ENCODE measurements at regions of chr3 and their contacts with region 1.

Region 1: DNA sequence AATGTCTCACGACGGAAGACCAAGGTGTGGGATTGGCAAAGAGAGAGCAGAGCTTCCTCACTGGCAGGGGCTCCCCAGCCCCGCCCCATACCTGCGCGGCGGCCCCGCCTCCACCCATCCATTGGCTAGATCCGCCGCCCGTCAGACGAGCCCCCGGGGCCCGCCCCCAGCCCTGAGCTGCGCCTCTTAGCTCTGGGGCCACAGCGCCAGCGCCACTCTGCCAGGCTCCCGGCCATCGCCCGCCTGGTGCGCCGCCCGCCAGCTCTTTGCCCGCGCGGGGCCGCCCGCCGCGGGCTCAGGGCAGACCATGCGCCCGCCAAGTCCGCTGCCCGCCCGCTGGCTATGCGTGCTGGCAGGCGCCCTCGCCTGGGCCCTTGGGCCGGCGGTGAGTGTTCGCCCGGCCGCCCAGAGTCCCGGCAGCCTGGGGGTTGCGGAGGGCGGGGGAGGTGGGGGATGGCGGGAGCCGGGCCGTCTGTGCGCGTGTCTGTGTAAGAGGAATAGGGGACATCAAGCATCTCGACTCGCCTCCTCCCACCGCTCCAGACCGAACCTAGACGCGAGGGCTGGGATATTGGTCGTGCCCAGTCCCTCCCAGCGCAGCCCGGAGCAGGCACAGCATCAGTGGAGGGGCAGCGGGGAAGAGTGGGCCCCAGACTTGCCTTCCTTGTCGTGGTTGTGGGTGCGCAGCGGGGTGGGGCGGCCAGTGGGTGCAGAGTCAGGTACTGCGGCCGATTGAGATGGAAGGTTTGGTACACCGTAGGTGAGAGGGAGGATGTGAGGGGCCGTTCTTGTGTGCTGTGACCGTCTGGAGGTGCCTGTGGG is at the start of gene VIPR1:
- DNase-seq: peak; percentile 74 to 83 (median 79)
- H3K4me3 ChIP-seq: peak within 1 kb of the TSS; percentile 28 to 87 (median 68)
- H3K27ac ChIP-seq: no peak within 1 kb of the TSS
- H3K4me1 ChIP-seq: peaks cover 0 to 37% (median 27%) of the 10 kb centered on the region in 4 experiments
- H3K27me3 ChIP-seq: peaks cover 4 to 43% (median 16%) of the 10 kb centered on the region in 5 experiments

Region 2: DNA sequence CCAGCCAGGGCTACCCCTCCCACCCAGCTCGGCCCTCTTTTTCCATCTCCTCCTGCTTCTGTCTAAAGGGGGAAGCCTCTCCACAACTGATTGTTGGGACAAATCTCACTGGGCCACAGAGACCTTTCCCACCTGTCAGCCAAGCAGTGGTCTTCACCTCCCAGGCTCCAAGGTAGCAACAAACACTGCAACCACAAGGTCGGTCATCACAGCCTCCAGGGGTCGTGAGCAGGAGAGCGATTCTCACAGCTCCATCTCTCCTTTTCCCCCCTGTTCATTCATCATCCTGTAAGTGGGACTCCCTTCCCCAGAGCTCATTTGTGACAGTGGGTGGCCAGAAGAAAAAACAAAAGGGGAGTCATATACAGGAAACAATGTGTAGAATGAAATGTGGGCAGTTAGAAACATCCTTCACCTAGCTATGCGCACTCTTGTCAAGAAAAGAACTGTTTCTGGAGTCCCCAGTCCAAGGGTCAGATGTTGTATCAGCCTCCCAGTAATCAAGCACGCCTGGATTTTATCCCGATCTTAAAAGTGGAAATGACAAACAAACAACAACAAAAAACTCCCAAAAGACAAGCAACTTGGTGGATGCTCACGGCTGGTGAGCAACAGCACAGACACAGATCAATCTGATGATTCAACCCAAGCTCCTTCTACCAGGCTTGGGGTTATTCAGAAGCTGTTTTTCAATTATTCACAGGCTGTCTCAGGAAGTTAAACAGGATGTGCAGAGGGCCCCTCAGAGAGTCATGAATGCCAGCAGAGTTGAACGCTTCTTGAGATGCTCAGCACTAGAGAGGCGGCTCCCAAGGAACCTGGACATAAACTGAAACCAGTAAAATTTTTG is 114.6 kb before region 1 on chr3:
- CTCF ChIA-PET with region 1: no interaction called
- POLR2A ChIA-PET with region 1: no interaction called
- DNase-seq: peak; percentile 10 to 62 (median 51)
- H3K4me3 ChIP-seq: peak overlapping the region in 1 of 7 experiments; percentile 26
- H3K27ac ChIP-seq: no peak overlapping the region
- H3K4me1 ChIP-seq: peaks cover 3 to 25% (median 19%) of the 10 kb centered on the region in 4 experiments
- H3K27me3 ChIP-seq: peaks cover 0 to 3% (median 0%) of the 10 kb centered on the region in 5 experiments

Region 3: DNA sequence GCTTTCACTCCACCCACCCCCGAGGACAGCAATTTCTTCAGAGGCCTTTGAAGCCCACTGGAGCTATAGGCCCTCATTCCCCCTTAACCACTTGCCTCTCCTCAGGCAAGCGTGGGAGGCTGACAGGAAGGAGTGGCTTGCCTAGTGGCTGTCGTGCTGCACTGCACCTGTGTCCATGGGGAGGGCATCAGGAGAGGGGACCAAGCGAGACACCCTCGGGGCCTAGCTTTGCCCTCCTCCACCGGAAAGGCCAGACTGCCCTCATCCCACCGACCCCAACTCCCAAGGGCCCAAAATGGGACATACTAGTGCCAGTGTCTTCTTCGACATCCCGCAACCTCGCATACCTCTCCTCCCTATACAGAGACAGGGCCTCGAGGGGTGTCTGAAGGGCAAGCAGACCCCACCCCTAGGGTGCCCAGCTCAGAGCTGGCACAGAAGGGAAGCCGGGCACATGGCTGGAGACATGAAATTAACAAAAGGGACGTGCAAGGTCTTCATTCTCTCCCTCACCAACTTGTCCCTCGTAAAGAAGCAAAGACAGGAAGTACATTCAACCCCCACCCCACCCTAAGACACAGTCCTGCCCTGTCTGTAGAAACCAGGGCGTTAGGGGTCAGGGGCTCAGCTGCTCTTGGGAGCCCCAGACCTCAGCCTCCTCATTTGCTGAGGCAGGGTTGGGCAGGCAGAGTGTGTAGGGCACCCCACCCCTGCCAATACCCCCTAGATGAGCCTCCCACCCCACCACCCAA is 24.2 kb after region 1 on chr3:
- CTCF ChIA-PET with region 1: interaction called, 14 read pairs
- POLR2A ChIA-PET with region 1: no interaction called
- DNase-seq: peak in 2 of 3 donors; percentile 35 to 40
- H3K4me3 ChIP-seq: no peak overlapping the region
- H3K27ac ChIP-seq: no peak overlapping the region
- H3K4me1 ChIP-seq: peaks cover 0 to 54% (median 9%) of the 10 kb centered on the region in 4 experiments
- H3K27me3 ChIP-seq: no peaks in the 10 kb centered on the region

Region 4: DNA sequence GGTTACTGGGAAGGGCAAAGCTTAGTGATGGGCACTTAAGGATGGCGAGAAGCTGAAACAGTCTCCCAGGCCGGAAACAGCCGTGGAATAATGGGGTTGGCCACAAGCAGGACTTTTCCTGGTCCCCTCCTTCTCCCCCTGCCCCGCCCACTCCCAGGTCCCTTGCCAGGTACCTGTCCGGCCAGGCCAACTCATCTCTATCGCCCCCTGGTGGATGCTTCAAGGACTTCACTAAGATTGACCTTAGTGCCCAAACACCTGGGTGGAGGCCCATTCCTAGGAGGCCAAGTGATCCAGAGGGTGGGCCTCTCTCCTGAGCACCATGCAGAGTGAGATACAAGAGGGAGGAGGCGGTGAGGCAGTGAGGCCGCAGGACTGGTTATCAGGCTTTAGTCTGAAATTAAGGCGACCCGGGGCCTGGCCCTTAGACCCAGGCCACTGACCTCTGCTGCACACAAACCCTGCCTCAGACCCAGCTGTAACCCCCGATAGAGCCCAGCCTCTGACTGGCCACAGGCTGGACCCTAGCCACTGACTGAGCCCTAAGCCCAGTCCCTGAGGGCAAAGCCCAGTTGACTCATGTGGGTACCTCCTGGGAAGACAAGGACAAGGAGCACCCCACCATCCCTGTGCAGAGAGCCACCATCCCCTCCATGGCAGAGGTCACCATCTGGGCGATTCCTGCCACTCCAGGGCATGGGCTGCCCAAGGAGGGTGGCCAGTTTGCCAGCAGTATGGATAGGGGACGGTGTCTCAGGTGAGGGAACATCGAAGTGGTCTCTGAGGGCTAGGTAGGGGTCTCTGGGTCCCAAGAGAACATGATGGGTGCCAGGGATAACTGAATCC is 37.5 kb after region 1 on chr3:
- CTCF ChIA-PET with region 1: interaction called, 21 read pairs
- POLR2A ChIA-PET with region 1: no interaction called
- DNase-seq: peak; percentile 39 to 58 (median 49)
- H3K4me3 ChIP-seq: no peak overlapping the region
- H3K27ac ChIP-seq: no peak overlapping the region
- H3K4me1 ChIP-seq: peaks cover 0 to 4% (median 0%) of the 10 kb centered on the region in 4 experiments
- H3K27me3 ChIP-seq: no peaks in the 10 kb centered on the region